Naive thymus-derived CD4-positive, alpha-beta T cell (primary cell): ENCODE measurements at regions of chr3 and their contacts with region 1.

Region 1: GRCh38 chr3:171309906-171310359 is 150.3 kb downstream of the TNIK start:
- DNase-seq: no peak
- ATAC-seq: no peak
- H3K4me3 ChIP-seq: no peak overlapping the region
- H3K4me3 Mint-ChIP-seq: peak overlapping the region in 1 of 10 donors; percentile 73
- H3K27ac ChIP-seq: no peak overlapping the region
- H3K27ac Mint-ChIP-seq: peak overlapping the region in 5 of 9 donors; percentile 4 to 75 (median 45)
- H3K4me1 ChIP-seq: peaks cover 0 to 8% of the 10 kb centered on the region in 2 donors
- H3K4me1 Mint-ChIP-seq: peaks cover 35 to 96% (median 88%) of the 10 kb centered on the region in 7 donors
- H3K27me3 ChIP-seq: no peaks in the 10 kb centered on the region
- H3K27me3 Mint-ChIP-seq: no peaks in the 10 kb centered on the region

Region 2: DNA sequence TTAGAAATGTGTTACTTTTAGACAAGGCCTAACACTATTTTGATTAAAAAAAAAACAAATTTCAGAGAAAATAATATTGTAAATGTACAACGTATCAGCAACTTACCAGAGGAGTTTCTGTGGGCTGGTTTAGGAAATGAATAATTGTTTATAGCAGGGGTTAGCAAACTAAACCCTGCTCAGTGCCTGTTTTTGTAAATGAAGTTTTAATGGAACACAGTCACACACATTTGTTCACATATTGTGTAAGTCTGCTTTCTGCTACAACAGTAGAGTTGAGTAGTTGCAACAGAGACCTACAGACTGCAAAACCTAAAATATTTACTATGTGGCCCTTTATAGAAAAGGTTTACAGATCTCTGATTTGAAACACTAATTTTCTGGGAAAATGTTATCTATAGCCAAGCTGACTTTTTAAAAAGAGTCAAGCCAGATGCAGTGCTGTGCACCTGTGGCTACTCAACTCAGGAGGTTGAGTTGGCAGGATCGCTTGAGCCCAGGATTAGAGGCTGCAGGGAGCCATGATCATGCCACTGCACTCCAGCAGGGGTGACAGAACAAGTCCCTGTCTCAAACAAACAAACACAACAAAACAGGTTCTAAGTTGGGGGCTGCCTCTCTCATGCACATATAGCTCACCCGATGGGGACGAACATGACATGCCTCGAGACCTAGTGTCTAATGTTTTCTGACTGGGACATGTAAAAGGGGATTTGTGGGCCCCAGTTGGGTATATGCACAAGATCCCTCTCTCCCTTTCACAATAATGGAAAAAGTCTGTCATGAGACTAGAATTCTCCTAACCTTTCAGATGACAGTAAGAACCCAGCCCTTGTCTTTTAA is 32.3 kb before region 1 on chr3:
- CTCF ChIA-PET with region 1: interaction called, 5 read pairs
- POLR2A ChIA-PET with region 1: no interaction called
- intact Hi-C with region 1: loop called in 1 of 2 experiments (anchors 5 kb)
- DNase-seq: no peak
- ATAC-seq: no peak
- H3K4me3 ChIP-seq: no peak overlapping the region
- H3K4me3 Mint-ChIP-seq: peak overlapping the region in 1 of 10 donors; percentile 9
- H3K27ac ChIP-seq: no peak overlapping the region
- H3K27ac Mint-ChIP-seq: peak overlapping the region in 2 of 9 donors; percentile 21 to 34
- H3K4me1 ChIP-seq: peaks cover 6 to 18% of the 10 kb centered on the region in 2 donors
- H3K4me1 Mint-ChIP-seq: peaks cover 39 to 85% (median 73%) of the 10 kb centered on the region in 7 donors
- H3K27me3 ChIP-seq: no peaks in the 10 kb centered on the region
- H3K27me3 Mint-ChIP-seq: no peaks in the 10 kb centered on the region

Region 3: DNA sequence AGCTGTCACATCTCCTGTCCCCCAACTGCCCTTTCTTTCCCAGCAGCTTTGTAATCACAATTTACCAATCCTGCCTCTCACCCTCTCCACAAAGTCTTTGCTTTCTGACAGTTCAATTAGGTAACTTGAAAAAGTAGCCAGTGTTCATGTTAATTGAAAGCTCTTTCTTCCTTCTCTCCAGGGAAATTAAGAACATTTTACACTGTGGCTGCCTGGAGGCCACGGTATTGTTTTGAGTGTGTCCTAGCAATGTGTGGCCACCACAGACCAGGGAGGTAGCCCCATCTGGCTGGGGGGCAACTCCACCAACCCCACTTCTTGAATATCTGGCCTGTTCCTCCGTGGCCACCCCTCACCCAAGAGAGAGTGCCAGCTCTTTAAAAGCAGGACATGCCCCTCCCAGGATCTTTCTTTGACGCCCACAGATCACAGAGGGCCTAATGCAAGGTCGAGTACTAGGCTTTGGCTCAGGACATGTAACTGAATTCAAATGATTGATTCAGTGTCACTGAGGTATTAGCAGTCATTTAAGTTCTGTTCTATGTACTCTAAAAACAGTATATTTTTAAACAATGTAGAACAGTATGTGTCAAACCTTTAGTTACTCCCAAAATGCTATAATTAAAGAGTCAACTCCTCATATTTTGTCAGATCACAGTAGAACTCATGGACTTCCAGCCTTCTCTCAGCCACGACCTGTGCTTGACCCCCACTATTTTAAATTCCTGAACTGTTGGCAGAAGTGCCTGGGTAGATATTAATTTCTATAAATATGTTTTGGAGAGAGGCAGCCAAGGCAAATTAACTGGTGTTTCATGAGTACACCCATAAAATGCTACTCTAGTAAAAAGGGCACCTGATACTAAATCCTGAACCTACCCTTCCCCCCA is 14.2 kb before region 1 on chr3:
- CTCF ChIA-PET with region 1: no interaction called
- POLR2A ChIA-PET with region 1: interaction called, 3 read pairs
- intact Hi-C with region 1: loop called in 1 of 2 experiments (anchors 2 kb)
- DNase-seq: no peak
- ATAC-seq: no peak
- H3K4me3 ChIP-seq: no peak overlapping the region
- H3K4me3 Mint-ChIP-seq: peak overlapping the region in 2 of 10 donors; percentile 7 to 48
- H3K27ac ChIP-seq: no peak overlapping the region
- H3K27ac Mint-ChIP-seq: peak overlapping the region in 8 of 9 donors; percentile 12 to 72 (median 41)
- H3K4me1 ChIP-seq: peaks cover 6 to 19% of the 10 kb centered on the region in 2 donors
- H3K4me1 Mint-ChIP-seq: peaks cover 36 to 87% (median 77%) of the 10 kb centered on the region in 7 donors
- H3K27me3 ChIP-seq: no peaks in the 10 kb centered on the region
- H3K27me3 Mint-ChIP-seq: no peaks in the 10 kb centered on the region